ENCODE measurements at regions of chr15 and their contacts with region 1.

Region 1: DNA sequence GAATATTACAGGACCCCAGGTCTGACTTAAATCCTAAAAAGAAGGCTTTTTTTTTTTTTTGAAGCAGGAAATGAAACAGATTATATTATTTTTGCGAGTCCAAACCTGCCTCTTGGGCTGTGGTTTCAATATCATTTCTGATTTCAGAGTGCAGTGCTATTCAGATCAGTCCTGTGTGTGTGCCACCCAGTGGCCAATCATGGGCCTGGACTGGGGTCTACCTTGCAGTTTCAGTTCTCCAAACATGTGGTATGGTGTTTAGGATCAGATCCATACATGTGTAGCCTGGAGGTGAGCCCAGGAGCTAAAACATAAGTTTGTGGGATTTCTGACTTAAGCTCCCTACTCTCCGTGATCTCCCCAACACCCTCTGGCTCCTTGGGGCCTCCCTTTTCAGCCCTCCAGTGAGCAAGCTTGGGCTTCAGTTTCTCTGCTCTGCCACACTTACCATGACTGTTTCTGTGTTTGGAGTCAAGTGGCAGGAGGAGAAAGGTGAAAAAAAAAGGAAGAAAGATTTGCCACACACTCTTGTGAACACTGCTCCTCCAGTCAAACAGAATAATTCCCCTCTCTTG is 12.1 kb upstream of the THSD4 start:
- DNase-seq: peak in 1 of 2 experiments; percentile 34
- H3K4me3 ChIP-seq: no peak overlapping the region
- H3K27ac ChIP-seq: no peak overlapping the region
- H3K4me1 ChIP-seq: peaks cover 0 to 2% (median under 1%) of the 10 kb centered on the region in 4 experiments; a peak in 2 of 7 replicates
- H3K27me3 ChIP-seq: peaks cover 0 to 1% (median 0%) of the 10 kb centered on the region in 4 experiments; a peak in 1 of 7 replicates
- CTCF ChIP-seq: peak; percentile 46 to 58 (median 56)
- EP300 ChIP-seq: no peak
- POLR2A ChIP-seq: no peak
- RAD21 ChIP-seq: peak; percentile 52 to 58

Region 2: GRCh38 chr15:71011503-71012155 is 91.6 kb before region 1 on chr15:
- CTCF ChIA-PET with region 1: interaction called, 14 read pairs
- POLR2A ChIA-PET with region 1: no interaction called
- DNase-seq: no peak
- H3K4me3 ChIP-seq: no peak overlapping the region
- H3K27ac ChIP-seq: no peak overlapping the region
- H3K4me1 ChIP-seq: no peaks in the 10 kb centered on the region
- H3K27me3 ChIP-seq: no peaks in the 10 kb centered on the region
- CTCF ChIP-seq: peak in 2 of 3 experiments; percentile 53 to 73; a peak in 2 of 4 replicates
- EP300 ChIP-seq: no peak
- POLR2A ChIP-seq: no peak
- RAD21 ChIP-seq: peak; percentile 87 to 93

Region 3: DNA sequence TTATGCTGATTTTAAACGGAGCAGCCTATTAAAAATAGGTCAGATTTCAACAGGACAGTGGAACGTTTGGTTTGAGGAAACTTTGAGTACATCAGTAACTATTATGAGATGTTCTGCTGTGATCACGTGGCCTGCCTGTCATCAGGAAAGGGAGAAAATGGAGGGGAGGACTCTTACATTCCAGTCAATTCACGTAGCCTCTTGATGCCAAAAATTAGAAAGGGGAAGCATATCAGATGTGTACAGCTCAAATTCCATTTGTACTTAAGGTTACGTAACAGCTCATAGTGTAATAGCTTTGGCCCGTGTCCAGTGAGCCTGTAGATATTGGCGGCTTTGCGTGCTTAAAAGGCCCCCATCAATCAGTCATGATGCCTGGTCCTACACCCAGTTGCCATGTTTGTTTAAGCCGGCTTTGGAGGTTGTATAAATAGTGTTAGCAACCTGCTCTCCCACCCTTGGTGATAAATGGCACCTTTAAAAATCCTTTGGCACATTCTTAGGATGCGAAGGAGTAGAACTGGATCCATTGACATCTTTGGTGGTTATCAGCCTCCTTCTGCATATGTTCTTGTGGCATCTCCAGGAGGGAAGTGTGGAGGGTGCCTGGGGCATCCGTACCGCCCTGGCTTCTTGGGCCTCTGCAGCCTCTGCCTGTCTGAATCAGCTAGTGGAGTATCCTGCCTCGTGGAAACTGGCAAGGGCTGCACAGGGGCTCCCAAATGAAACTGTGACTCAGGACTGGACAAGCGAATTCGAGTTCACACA is 176.0 kb after region 1 on chr15:
- CTCF ChIA-PET with region 1: no interaction called
- POLR2A ChIA-PET with region 1: no interaction called
- DNase-seq: no peak
- H3K4me3 ChIP-seq: no peak overlapping the region
- H3K27ac ChIP-seq: no peak overlapping the region
- H3K4me1 ChIP-seq: peaks cover 0 to 5% (median 2%) of the 10 kb centered on the region in 4 experiments; a peak in 1 of 7 replicates
- H3K27me3 ChIP-seq: no peaks in the 10 kb centered on the region
- CTCF ChIP-seq: no peak
- EP300 ChIP-seq: no peak
- POLR2A ChIP-seq: no peak
- RAD21 ChIP-seq: no peak

Measured in H1 (cell line).